Activated naive CD4-positive, alpha-beta T cell treated with anti-CD3 and anti-CD28 coated beads, Interleukin-2, amount 10 ng/mL, durations not matched to agents 7 days and 5 days (primary cell): ENCODE measurements at regions of chr1 and their contacts with region 1.

Region 1: GRCh38 chr1:156625436-156626078 is 6.3 kb downstream of the HAPLN2 start:
- DNase-seq: peak; percentile 74
- H3K4me3 Mint-ChIP-seq: peak overlapping the region; percentile 4
- H3K27ac Mint-ChIP-seq: peak overlapping the region; percentile 31
- H3K4me1 Mint-ChIP-seq: peaks cover 12% of the 10 kb centered on the region
- H3K27me3 Mint-ChIP-seq: peaks cover 84% of the 10 kb centered on the region

Region 2: DNA sequence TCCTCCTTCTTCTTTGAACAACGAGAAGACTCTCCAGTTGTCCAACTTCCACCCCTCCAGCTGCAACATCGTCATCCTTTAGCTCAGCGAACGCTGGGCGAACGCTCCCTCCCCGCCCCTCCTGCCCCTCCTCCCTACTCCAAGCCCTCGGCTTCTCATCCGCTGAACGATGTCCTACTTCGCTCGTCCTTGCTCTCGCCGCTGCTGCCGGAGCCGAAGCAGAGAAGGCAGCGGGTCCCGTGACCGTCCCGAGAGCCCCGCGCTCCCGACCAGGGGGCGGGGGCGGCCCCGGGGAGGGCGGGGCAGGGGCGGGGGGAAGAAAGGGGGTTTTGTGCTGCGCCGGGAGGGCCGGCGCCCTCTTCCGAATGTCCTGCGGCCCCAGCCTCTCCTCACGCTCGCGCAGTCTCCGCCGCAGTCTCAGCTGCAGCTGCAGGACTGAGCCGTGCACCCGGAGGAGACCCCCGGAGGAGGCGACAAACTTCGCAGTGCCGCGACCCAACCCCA is 16.3 kb after region 1 on chr1 and contains the start of gene BCAN:
- CTCF ChIA-PET with region 1: interaction called, 47 read pairs
- DNase-seq: peak; percentile 38
- H3K4me3 Mint-ChIP-seq: no peak within 1 kb of the TSS
- H3K27ac Mint-ChIP-seq: peak within 1 kb of the TSS; percentile 68
- H3K4me1 Mint-ChIP-seq: peaks cover 33% of the 10 kb centered on the region
- H3K27me3 Mint-ChIP-seq: peaks cover 94% of the 10 kb centered on the region

Region 3: GRCh38 chr1:156648951-156649350 is 23.4 kb after region 1 on chr1:
- CTCF ChIA-PET with region 1: interaction called, 47 read pairs
- DNase-seq: no peak
- H3K4me3 Mint-ChIP-seq: no peak overlapping the region
- H3K27ac Mint-ChIP-seq: no peak overlapping the region
- H3K4me1 Mint-ChIP-seq: peaks cover 9% of the 10 kb centered on the region
- H3K27me3 Mint-ChIP-seq: peaks cover 99% of the 10 kb centered on the region

Region 4: GRCh38 chr1:156677616-156678596 is 52.3 kb after region 1 on chr1:
- CTCF ChIA-PET with region 1: interaction called, 82 read pairs
- DNase-seq: peak; percentile 49
- H3K4me3 Mint-ChIP-seq: no peak overlapping the region
- H3K27ac Mint-ChIP-seq: no peak overlapping the region
- H3K4me1 Mint-ChIP-seq: peaks cover 9% of the 10 kb centered on the region
- H3K27me3 Mint-ChIP-seq: peaks cover 98% of the 10 kb centered on the region

Region 5: GRCh38 chr1:156733989-156734584 is 108.5 kb after region 1 on chr1:
- CTCF ChIA-PET with region 1: no interaction called
- DNase-seq: no peak
- H3K4me3 Mint-ChIP-seq: no peak overlapping the region
- H3K27ac Mint-ChIP-seq: no peak overlapping the region
- H3K4me1 Mint-ChIP-seq: peaks cover 22% of the 10 kb centered on the region
- H3K27me3 Mint-ChIP-seq: no peaks in the 10 kb centered on the region